CD4-positive, alpha-beta memory T cell (primary cell): ENCODE measurements at regions of chr17 and their contacts with region 1.

Region 1: GRCh38 chr17:76053246-76054116 is 18.8 kb downstream of the SRP68 start:
- DNase-seq: no peak
- H3K4me3 ChIP-seq: no peak overlapping the region
- H3K4me3 Mint-ChIP-seq: no peak overlapping the region
- H3K27ac ChIP-seq: no peak overlapping the region
- H3K27ac Mint-ChIP-seq: peak overlapping the region in 4 of 7 donors; percentile 31 to 52 (median 42)
- H3K4me1 ChIP-seq: peaks cover 6% of the 10 kb centered on the region
- H3K4me1 Mint-ChIP-seq: peaks cover 14 to 23% (median 20%) of the 10 kb centered on the region in 4 donors
- H3K27me3 ChIP-seq: no peaks in the 10 kb centered on the region
- H3K27me3 Mint-ChIP-seq: no peaks in the 10 kb centered on the region

Region 2: DNA sequence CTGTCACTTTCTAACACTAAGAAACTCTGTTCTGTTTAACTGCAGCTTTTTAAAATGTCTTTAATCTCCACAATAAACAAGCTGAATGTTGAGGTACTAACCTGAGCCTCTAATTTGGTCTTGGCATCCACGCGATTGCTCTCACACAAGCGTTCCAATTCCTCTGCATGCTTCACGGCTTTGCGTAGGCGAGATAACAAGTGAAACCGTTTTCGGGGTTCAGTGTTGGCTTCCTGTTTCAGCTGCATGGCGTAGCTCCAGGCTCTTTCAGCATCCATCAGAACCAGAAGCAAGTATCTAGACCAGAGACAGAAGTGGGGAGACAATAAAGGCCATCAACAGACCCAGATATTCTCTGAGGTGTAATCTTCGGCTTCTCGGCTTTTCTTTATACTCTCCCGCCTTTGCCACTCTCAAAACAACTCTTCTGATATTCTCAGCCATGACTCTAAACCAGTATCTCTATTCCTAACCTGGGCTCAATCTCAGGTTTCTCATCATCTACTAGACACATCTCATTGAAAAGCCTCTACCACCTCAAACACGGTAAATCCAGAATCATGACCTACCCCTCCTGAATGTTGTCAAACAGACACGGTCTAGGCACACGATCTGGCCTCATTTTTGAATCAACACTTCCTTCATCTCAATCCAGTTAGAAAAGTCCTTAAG is 10.5 kb after region 1 on chr17:
- CTCF ChIA-PET with region 1: interaction called, 4 read pairs
- POLR2A ChIA-PET with region 1: interaction called, 7 read pairs
- intact Hi-C with region 1: loop called (anchors 2 kb)
- DNase-seq: peak; percentile 50 to 78 (median 61)
- H3K4me3 ChIP-seq: no peak overlapping the region
- H3K4me3 Mint-ChIP-seq: peak overlapping the region; percentile 69 to 92 (median 74)
- H3K27ac ChIP-seq: peak overlapping the region; percentile 47
- H3K27ac Mint-ChIP-seq: peak overlapping the region; percentile 92 to 98 (median 97)
- H3K4me1 ChIP-seq: peaks cover 16% of the 10 kb centered on the region
- H3K4me1 Mint-ChIP-seq: peaks cover 18 to 34% (median 22%) of the 10 kb centered on the region in 4 donors
- H3K27me3 ChIP-seq: no peaks in the 10 kb centered on the region
- H3K27me3 Mint-ChIP-seq: no peaks in the 10 kb centered on the region